Heart right ventricle (tissue), 16 donors: ENCODE measurements at regions of chr13 and their contacts with region 1.

Region 1: GRCh38 chr13:98972627-98973026 is 5.2 kb downstream of the DOCK9 start:
- DNase-seq: no peak
- ATAC-seq: no peak
- H3K4me3 ChIP-seq: peak overlapping the region in 3 of 10 donors; percentile 5 to 14 (median 10)
- H3K27ac ChIP-seq: peak overlapping the region in 8 of 10 donors; percentile 4 to 88 (median 70)
- H3K4me1 ChIP-seq: peaks cover 24 to 92% (median 65%) of the 10 kb centered on the region in 9 donors
- H3K27me3 ChIP-seq: no peaks in the 10 kb centered on the region
- CTCF ChIP-seq: no peak

Region 2: GRCh38 chr13:98927951-98928927 is 44.4 kb before region 1 on chr13:
- intact Hi-C with region 1: loop called in 2 of 10 experiments (anchors 5 kb)
- DNase-seq: peak in 1 of 2 donors; percentile 74
- ATAC-seq: peak; percentile 85 to 95 (median 94)
- H3K4me3 ChIP-seq: no peak overlapping the region
- H3K27ac ChIP-seq: peak overlapping the region; percentile 51 to 81 (median 68)
- H3K4me1 ChIP-seq: peaks cover 0 to 79% (median 31%) of the 10 kb centered on the region in 9 donors
- H3K27me3 ChIP-seq: no peaks in the 10 kb centered on the region
- CTCF ChIP-seq: no peak

Region 3: GRCh38 chr13:99067160-99067985 is 94.7 kb after region 1 on chr13:
- intact Hi-C with region 1: no loop called
- DNase-seq: no peak
- ATAC-seq: no peak
- H3K4me3 ChIP-seq: no peak overlapping the region
- H3K27ac ChIP-seq: peak overlapping the region in 4 of 10 donors; percentile 18 to 64 (median 53)
- H3K4me1 ChIP-seq: peaks cover 0 to 51% (median 26%) of the 10 kb centered on the region in 9 donors
- H3K27me3 ChIP-seq: peaks cover 0 to 77% (median 0%) of the 10 kb centered on the region in 7 donors
- CTCF ChIP-seq: no peak